Prostate gland (tissue), 2 donors: ENCODE measurements at regions of chr4 and their contacts with region 1.

Region 1: DNA sequence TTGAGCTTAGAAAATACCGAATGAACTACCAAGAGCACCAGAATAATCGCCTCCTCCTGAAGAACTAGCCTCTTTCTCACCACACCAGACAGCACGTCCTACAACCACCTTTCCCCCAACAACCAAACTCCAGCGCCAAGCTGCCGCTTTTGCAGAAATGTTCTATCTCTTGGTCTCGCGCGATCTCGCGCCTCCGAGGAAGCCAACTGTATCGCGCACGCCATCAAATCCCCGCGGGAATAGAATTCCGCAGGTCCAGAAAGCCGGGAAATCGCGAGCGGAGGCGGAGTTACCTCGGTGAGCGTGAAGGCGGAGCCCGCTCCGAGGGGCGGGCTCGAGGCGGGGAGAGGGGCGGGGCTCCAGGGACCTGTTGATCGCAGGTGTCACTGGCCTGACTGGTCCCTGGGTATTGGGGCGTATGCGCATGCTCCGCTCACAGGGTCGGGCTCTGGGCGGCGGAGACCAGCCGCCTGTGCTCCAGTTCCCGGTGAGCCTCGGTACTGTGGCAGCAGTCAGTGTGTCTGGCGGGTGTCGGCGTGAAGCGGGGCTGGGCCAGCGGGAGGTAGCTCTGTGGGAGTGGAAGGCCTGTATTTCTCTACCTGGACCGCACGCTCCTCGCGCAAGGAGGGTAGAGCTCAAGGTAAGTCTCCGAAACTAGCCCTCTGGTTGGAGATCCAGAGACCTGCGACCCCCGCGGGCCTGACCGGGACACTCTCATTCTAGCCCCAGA is at the start of gene USP53:
- DNase-seq: peak; percentile 99
- H3K4me3 ChIP-seq: peak within 1 kb of the TSS; percentile 83 to 86
- H3K27ac ChIP-seq: peak within 1 kb of the TSS; percentile 97
- H3K4me1 ChIP-seq: no peaks in the 10 kb centered on the region
- H3K27me3 ChIP-seq: no peaks in the 10 kb centered on the region
- CTCF ChIP-seq: peak in 1 of 4 experiments; percentile 48
- POLR2A ChIP-seq: peak; percentile 98
- total RNA-seq, gene USP53: 33.9 to 41.8 TPM

Region 2: DNA sequence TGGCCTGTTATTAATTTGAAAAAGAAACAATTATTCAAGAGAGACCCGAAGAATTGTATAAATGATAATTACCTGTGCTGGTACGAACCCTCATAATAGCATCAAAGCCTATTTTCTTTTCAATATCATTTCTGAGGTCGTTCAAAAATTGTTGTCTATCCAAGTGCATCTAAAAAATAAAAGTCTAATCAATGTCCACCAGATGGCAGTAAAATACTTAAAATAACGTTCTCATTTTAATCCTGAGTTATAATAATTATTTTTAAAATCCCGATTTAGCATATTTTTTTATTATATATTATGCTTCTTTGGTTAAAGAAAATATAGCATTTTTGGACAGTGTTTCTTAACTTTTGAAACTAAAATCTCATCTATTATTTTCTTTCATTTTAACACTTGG is 471.5 kb before region 1 on chr4:
- intact Hi-C with region 1: loop called (anchors 10 kb)
- DNase-seq: no peak
- H3K4me3 ChIP-seq: no peak overlapping the region
- H3K27ac ChIP-seq: no peak overlapping the region
- H3K4me1 ChIP-seq: peaks cover 3% of the 10 kb centered on the region
- H3K27me3 ChIP-seq: no peaks in the 10 kb centered on the region
- CTCF ChIP-seq: peak in 3 of 4 experiments; percentile 54 to 66 (median 58)
- POLR2A ChIP-seq: no peak

Region 3: GRCh38 chr4:118989098-118990080 is 223.0 kb before region 1 on chr4:
- intact Hi-C with region 1: loop called (anchors 2 kb)
- DNase-seq: no peak
- H3K4me3 ChIP-seq: no peak overlapping the region
- H3K27ac ChIP-seq: peak overlapping the region; percentile 63 to 70
- H3K4me1 ChIP-seq: peaks cover 2% of the 10 kb centered on the region
- H3K27me3 ChIP-seq: no peaks in the 10 kb centered on the region
- CTCF ChIP-seq: no peak
- POLR2A ChIP-seq: no peak

Region 4: DNA sequence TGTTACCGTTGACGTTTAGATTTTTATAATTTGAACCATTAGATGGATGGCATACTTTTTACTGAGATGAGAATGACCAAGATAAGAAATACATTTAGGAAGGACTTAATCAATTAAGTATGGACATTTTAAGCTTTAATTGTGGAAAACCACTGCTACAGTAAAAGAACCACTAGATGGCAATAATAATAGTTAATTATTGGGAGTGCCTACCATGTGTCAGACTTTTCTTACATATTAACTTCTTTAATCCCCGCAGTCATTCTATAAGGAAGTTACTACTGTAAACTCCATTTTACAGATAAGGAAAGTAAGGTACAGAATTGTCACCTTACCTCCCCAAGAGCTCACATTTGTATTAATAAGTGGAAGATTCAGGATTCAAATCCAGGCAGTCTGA is 125.3 kb before region 1 on chr4:
- intact Hi-C with region 1: loop called (anchors 10 kb)
- DNase-seq: no peak
- H3K4me3 ChIP-seq: no peak overlapping the region
- H3K27ac ChIP-seq: no peak overlapping the region
- H3K4me1 ChIP-seq: no peaks in the 10 kb centered on the region
- H3K27me3 ChIP-seq: no peaks in the 10 kb centered on the region
- CTCF ChIP-seq: peak in 1 of 4 experiments; percentile 8
- POLR2A ChIP-seq: no peak

Region 5: GRCh38 chr4:119162174-119162573 is 50.2 kb before region 1 on chr4:
- intact Hi-C with region 1: no loop called
- DNase-seq: no peak
- H3K4me3 ChIP-seq: no peak overlapping the region
- H3K27ac ChIP-seq: no peak overlapping the region
- H3K4me1 ChIP-seq: no peaks in the 10 kb centered on the region
- H3K27me3 ChIP-seq: no peaks in the 10 kb centered on the region
- CTCF ChIP-seq: no peak
- POLR2A ChIP-seq: no peak

Region 6: GRCh38 chr4:119172223-119172622 is 40.2 kb before region 1 on chr4:
- intact Hi-C with region 1: no loop called
- DNase-seq: no peak
- H3K4me3 ChIP-seq: no peak overlapping the region
- H3K27ac ChIP-seq: no peak overlapping the region
- H3K4me1 ChIP-seq: no peaks in the 10 kb centered on the region
- H3K27me3 ChIP-seq: no peaks in the 10 kb centered on the region
- CTCF ChIP-seq: no peak
- POLR2A ChIP-seq: no peak

Region 7: GRCh38 chr4:119286377-119287002 is 74.1 kb after region 1 on chr4:
- intact Hi-C with region 1: loop called (anchors 10 kb)
- DNase-seq: peak; percentile 25
- H3K4me3 ChIP-seq: no peak overlapping the region
- H3K27ac ChIP-seq: no peak overlapping the region
- H3K4me1 ChIP-seq: no peaks in the 10 kb centered on the region
- H3K27me3 ChIP-seq: no peaks in the 10 kb centered on the region
- CTCF ChIP-seq: peak in 3 of 4 experiments; percentile 52 to 80 (median 68)
- POLR2A ChIP-seq: no peak

Region 8: DNA sequence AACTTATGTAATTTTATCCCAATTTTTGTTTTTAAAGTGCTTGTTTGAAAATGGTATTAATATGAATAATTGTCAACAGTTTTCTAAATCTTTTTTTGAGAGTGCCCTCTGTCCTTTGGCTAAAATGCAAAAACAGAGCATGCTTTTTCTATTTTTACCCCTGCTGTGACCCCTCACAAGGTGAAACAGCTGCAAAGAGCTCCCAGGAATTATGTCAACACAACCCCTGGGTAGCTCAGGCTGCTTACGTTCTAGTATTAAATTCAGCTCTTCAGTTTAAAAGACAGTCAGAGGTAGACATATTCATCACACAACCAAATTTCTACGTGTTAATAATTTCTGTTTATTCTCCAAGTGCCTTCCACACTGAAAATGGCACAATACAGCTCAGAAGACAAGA is 1342.7 kb after region 1 on chr4:
- intact Hi-C with region 1: no loop called
- DNase-seq: no peak
- H3K4me3 ChIP-seq: no peak overlapping the region
- H3K27ac ChIP-seq: no peak overlapping the region
- H3K4me1 ChIP-seq: no peaks in the 10 kb centered on the region
- H3K27me3 ChIP-seq: no peaks in the 10 kb centered on the region
- CTCF ChIP-seq: no peak
- POLR2A ChIP-seq: no peak